HepG2 (cell line): ENCODE measurements at regions of chr2 and their contacts with region 1.

Region 1: DNA sequence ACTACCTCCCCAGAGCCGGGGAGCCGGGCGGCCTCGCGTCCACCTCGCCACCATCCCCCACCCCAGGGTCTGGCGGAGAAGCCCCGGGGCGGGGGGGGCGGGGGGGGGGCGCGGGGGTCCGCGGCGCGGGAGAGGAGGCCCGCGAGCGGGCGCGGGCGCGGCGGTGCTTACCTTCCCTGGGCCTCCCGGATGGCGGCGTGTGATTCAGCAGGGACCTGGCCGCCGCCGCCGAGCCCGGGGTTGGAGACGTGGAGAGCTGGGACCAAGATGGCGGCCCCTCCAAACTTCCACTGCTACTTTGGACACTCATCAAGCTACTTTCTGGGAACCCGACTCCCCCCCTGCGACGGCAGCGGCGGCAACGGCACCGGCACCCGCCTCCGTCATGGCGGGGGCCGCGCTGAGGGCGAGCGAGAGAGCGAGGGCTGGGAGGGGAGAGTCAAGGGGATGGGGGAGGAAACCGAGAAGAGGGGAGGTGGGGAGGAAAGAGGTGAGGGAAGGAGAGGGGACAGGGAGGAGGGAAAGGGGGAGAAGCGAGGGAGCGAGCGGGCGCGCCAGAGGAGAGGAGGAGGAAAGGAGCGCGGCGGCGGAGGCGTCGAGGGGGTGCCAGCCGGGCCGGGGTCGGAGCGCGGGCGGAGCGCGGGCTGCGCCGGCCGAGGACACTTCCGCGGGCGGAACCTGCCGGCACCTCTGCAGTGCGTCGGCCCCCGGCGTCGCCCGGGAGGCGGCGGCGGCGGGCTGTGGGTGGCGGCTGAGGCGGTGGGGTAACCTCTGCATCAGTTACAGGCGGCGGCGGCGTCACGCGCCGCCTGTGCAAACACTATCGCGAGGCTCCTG is at the start of gene TLK1:
- DNase-seq: peak; percentile 62
- ATAC-seq: peak; percentile 81
- H3K4me3 ChIP-seq: peak within 1 kb of the TSS; percentile 73 to 99 (median 90)
- H3K27ac ChIP-seq: peak within 1 kb of the TSS; percentile 96
- H3K4me1 ChIP-seq: peaks cover 52% of the 10 kb centered on the region
- H3K27me3 ChIP-seq: no peaks in the 10 kb centered on the region; a peak in 1 of 5 replicates
- CTCF ChIP-seq: peak; percentile 15; the same call in 1 of the 2 replicates
- EP300 ChIP-seq: no peak
- POLR2A ChIP-seq: peak; percentile 49 to 72; a peak in 3 of 4 replicates
- RAD21 ChIP-seq: peak; percentile 80
- total RNA-seq, gene TLK1: 28.7 and 52.7 TPM in 2 replicates

Region 2: GRCh38 chr2:171086352-171087290 is 73.7 kb before region 1 on chr2:
- CTCF ChIA-PET with region 1: no interaction called
- POLR2A ChIA-PET with region 1: no interaction called
- in situ Hi-C with region 1: no loop called
- intact Hi-C with region 1: loop called (anchors 5 kb)
- DNase-seq: peak; percentile 65
- ATAC-seq: peak; percentile 79
- H3K4me3 ChIP-seq: peak overlapping the region in 1 of 3 experiments; percentile 3; a peak in 1 of 6 replicates
- H3K27ac ChIP-seq: peak overlapping the region; percentile 0
- H3K4me1 ChIP-seq: peaks cover 61% of the 10 kb centered on the region
- H3K27me3 ChIP-seq: no peaks in the 10 kb centered on the region
- CTCF ChIP-seq: peak; percentile 78
- EP300 ChIP-seq: no peak
- POLR2A ChIP-seq: no peak
- RAD21 ChIP-seq: peak; percentile 43; the same call in 1 of the 2 replicates

Region 3: GRCh38 chr2:171149986-171150693 is 10.2 kb before region 1 on chr2:
- CTCF ChIA-PET with region 1: no interaction called
- POLR2A ChIA-PET with region 1: interaction called, 24 read pairs
- in situ Hi-C with region 1: no loop called
- intact Hi-C with region 1: no loop called
- DNase-seq: peak; percentile 79
- ATAC-seq: peak; percentile 86
- H3K4me3 ChIP-seq: peak overlapping the region in 2 of 3 experiments; percentile 13 to 44; a peak in 2 of 6 replicates
- H3K27ac ChIP-seq: peak overlapping the region; percentile 70
- H3K4me1 ChIP-seq: peaks cover 86% of the 10 kb centered on the region
- H3K27me3 ChIP-seq: no peaks in the 10 kb centered on the region
- CTCF ChIP-seq: no peak
- EP300 ChIP-seq: 0 out of 4 replicates have a peak, but pooled peaks of 1 of the 2 experiments have one; percentile 20
- POLR2A ChIP-seq: peak in 1 of 2 experiments; percentile 34; a peak in 1 of 4 replicates
- RAD21 ChIP-seq: no peak

Region 4: GRCh38 chr2:171433763-171434670 is 273.7 kb after region 1 on chr2 and contains the starts of genes DCAF17 and METTL8:
- CTCF ChIA-PET with region 1: no interaction called
- POLR2A ChIA-PET with region 1: interaction called, 9 read pairs
- in situ Hi-C with region 1: no loop called
- intact Hi-C with region 1: loop called (anchors 5 kb)
- DNase-seq: peak; percentile 97
- ATAC-seq: peak; percentile 97
- H3K4me3 ChIP-seq: peak within 1 kb of the TSS; percentile 78 to 90 (median 88)
- H3K27ac ChIP-seq: peak within 1 kb of the TSS; percentile 87
- H3K4me1 ChIP-seq: peaks cover 75% of the 10 kb centered on the region
- H3K27me3 ChIP-seq: no peaks in the 10 kb centered on the region; a peak in 1 of 5 replicates
- CTCF ChIP-seq: peak; percentile 96
- EP300 ChIP-seq: peak; percentile 17 to 63; a peak in 2 of 4 replicates
- POLR2A ChIP-seq: peak; percentile 81 to 82
- RAD21 ChIP-seq: peak; percentile 62
- total RNA-seq, gene DCAF17: 30.0 and 35.3 TPM in 2 replicates
- total RNA-seq, gene METTL8: 68.2 and 89.8 TPM in 2 replicates